ENCODE measurements at regions of chr1 and their contacts with region 1.

Region 1: GRCh38 chr1:147627435-147628110 is 42.8 kb downstream of the ACP6 start:
- DNase-seq: peak; percentile 35 to 75
- ATAC-seq: peak; percentile 76 to 87 (median 84)
- H3K4me3 ChIP-seq: no peak overlapping the region
- H3K4me3 Mint-ChIP-seq: no peak overlapping the region
- H3K27ac ChIP-seq: no peak overlapping the region
- H3K27ac Mint-ChIP-seq: no peak overlapping the region
- H3K4me1 ChIP-seq: peaks cover 12% of the 10 kb centered on the region
- H3K4me1 Mint-ChIP-seq: peaks cover 20 to 31% of the 10 kb centered on the region in 2 donors
- H3K27me3 ChIP-seq: no peaks in the 10 kb centered on the region
- H3K27me3 Mint-ChIP-seq: no peaks in the 10 kb centered on the region
- CTCF ChIP-seq: peak; percentile 96

Region 2: GRCh38 chr1:147273409-147274336 is 353.9 kb before region 1 on chr1:
- intact Hi-C with region 1: loop called (anchors 5 kb)
- DNase-seq: peak in 1 of 2 donors; percentile 73
- ATAC-seq: peak in 2 of 3 donors; percentile 61 to 64
- H3K4me3 ChIP-seq: no peak overlapping the region
- H3K4me3 Mint-ChIP-seq: no peak overlapping the region
- H3K27ac ChIP-seq: no peak overlapping the region
- H3K27ac Mint-ChIP-seq: no peak overlapping the region
- H3K4me1 ChIP-seq: no peaks in the 10 kb centered on the region
- H3K4me1 Mint-ChIP-seq: peaks cover 4 to 5% of the 10 kb centered on the region in 2 donors
- H3K27me3 ChIP-seq: no peaks in the 10 kb centered on the region
- H3K27me3 Mint-ChIP-seq: no peaks in the 10 kb centered on the region
- CTCF ChIP-seq: peak; percentile 65

Region 3: DNA sequence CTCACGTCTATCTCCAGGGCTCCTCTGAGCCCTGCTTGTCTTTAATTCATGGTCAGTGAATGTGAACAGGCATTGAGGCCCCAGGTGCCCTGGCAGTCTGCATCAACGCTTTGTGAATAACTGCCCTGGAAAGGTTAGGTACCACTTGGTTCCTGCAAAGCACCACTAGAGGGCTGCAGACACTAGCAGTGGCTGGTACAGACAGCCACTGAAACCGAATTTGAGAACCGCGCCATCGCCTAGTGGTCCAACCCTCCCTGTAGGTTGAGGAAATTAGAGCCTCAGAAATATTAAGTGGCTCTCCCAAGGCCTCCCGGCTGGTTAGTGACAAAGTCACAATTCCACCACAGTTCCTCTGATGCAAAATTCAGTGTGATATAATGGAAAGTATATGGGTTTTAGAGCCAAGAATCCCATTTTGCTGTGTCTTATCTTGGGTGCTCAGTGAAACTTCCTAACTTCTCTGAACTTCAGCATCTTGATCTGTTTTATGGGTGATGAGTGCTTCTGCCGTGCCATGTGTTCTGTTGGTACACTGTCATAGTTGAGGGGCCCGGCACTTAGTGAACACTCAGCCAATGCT is 132.5 kb before region 1 on chr1:
- intact Hi-C with region 1: loop called (anchors 1 kb)
- DNase-seq: peak; percentile 48 to 85
- ATAC-seq: peak; percentile 88 to 100 (median 99)
- H3K4me3 ChIP-seq: no peak overlapping the region
- H3K4me3 Mint-ChIP-seq: no peak overlapping the region
- H3K27ac ChIP-seq: no peak overlapping the region
- H3K27ac Mint-ChIP-seq: no peak overlapping the region
- H3K4me1 ChIP-seq: no peaks in the 10 kb centered on the region
- H3K4me1 Mint-ChIP-seq: no peaks in the 10 kb centered on the region
- H3K27me3 ChIP-seq: no peaks in the 10 kb centered on the region
- H3K27me3 Mint-ChIP-seq: peaks cover 11 to 13% of the 10 kb centered on the region in 2 donors
- CTCF ChIP-seq: peak; percentile 87

Region 4: DNA sequence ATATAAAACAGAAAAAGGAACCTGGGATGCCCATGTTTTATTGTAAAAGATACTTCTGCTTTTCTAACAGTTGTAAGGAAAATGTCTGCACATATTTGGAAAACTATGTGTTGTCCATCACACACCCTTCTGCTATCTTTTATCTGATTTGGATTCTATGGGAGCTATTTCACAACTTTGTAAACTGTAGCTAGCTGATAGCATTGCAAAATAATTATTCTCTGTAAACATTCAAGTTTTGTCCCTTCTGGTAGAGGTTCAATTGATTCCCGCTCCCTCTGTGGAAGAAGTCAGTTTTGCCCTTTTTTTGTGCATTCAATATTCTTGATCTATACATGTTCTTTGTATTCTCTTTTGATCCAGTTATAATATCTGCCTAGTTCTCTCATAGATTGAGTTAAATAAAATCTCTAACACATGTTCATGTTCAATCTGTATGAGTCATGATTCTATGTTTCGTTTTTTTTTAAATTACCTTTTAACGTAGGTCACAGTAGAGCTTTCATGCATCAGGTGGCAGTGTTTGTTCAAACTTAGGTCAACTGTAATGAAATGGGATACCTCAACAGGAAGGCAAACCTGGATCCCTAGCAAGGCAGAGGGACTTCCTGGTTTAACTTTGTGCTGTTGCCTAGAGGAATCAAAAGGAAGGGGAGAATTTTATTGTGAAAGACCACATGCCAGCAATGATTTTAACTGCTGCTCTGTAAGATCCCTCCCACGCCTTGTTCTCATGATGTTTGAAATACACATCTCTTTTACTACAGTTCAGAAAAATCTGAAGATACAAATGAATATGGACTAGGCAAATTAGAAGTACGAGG is 112.3 kb before region 1 on chr1:
- intact Hi-C with region 1: loop called (anchors 1 kb)
- DNase-seq: peak in 1 of 2 donors; percentile 58
- ATAC-seq: peak in 2 of 3 donors; percentile 39 to 44
- H3K4me3 ChIP-seq: no peak overlapping the region
- H3K4me3 Mint-ChIP-seq: no peak overlapping the region
- H3K27ac ChIP-seq: no peak overlapping the region
- H3K27ac Mint-ChIP-seq: no peak overlapping the region
- H3K4me1 ChIP-seq: no peaks in the 10 kb centered on the region
- H3K4me1 Mint-ChIP-seq: peaks cover 6% of the 10 kb centered on the region in 2 donors
- H3K27me3 ChIP-seq: peaks cover 3% of the 10 kb centered on the region
- H3K27me3 Mint-ChIP-seq: peaks cover 16 to 32% of the 10 kb centered on the region in 2 donors
- CTCF ChIP-seq: no peak

Region 5: DNA sequence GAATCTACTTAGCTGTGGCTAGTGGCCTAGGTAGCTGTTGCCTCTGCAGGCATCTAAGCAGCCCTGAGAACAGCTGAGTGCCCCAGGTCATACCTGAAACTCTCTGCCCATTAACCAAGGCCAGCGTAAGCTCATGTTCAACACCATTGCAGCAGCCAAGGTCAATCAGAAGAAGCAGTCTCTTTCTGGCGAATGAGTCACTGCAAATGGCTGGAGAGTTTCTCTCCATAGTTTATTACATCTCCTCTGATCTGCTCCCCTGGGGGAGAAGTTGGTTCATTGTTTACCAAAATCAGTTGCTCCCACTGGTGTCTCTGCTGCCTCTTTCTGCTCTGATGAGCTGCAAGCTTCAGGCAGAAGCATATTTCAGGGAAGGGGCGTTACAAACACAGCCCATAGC is 93.2 kb before region 1 on chr1:
- intact Hi-C with region 1: no loop called
- DNase-seq: no peak
- ATAC-seq: no peak
- H3K4me3 ChIP-seq: no peak overlapping the region
- H3K4me3 Mint-ChIP-seq: no peak overlapping the region
- H3K27ac ChIP-seq: no peak overlapping the region
- H3K27ac Mint-ChIP-seq: no peak overlapping the region
- H3K4me1 ChIP-seq: no peaks in the 10 kb centered on the region
- H3K4me1 Mint-ChIP-seq: no peaks in the 10 kb centered on the region
- H3K27me3 ChIP-seq: peaks cover 10% of the 10 kb centered on the region
- H3K27me3 Mint-ChIP-seq: peaks cover 19 to 32% of the 10 kb centered on the region in 2 donors
- CTCF ChIP-seq: no peak

Region 6: DNA sequence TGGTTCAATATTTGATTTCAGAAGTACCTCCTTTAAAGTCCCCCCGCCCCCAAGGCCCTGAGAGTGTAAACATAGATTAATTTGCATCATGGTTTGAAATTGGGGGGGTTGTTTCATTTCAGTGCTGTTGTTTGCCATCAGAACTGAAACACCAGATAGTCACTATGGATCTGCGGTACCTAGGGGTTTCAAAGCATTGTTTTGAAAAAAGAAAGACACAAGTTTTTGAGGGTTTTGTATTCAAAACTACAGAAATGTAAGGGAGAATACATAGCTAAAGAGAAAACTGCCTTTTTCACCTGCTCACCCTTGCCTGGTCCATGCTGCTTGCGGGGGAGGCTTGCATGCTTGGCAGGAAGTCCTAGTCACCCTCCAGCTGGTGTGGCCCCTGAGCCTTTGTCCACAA is 16.5 kb before region 1 on chr1:
- intact Hi-C with region 1: no loop called
- DNase-seq: no peak
- ATAC-seq: no peak
- H3K4me3 ChIP-seq: no peak overlapping the region
- H3K4me3 Mint-ChIP-seq: no peak overlapping the region
- H3K27ac ChIP-seq: no peak overlapping the region
- H3K27ac Mint-ChIP-seq: no peak overlapping the region
- H3K4me1 ChIP-seq: no peaks in the 10 kb centered on the region
- H3K4me1 Mint-ChIP-seq: no peaks in the 10 kb centered on the region
- H3K27me3 ChIP-seq: no peaks in the 10 kb centered on the region
- H3K27me3 Mint-ChIP-seq: no peaks in the 10 kb centered on the region
- CTCF ChIP-seq: no peak

Region 7: DNA sequence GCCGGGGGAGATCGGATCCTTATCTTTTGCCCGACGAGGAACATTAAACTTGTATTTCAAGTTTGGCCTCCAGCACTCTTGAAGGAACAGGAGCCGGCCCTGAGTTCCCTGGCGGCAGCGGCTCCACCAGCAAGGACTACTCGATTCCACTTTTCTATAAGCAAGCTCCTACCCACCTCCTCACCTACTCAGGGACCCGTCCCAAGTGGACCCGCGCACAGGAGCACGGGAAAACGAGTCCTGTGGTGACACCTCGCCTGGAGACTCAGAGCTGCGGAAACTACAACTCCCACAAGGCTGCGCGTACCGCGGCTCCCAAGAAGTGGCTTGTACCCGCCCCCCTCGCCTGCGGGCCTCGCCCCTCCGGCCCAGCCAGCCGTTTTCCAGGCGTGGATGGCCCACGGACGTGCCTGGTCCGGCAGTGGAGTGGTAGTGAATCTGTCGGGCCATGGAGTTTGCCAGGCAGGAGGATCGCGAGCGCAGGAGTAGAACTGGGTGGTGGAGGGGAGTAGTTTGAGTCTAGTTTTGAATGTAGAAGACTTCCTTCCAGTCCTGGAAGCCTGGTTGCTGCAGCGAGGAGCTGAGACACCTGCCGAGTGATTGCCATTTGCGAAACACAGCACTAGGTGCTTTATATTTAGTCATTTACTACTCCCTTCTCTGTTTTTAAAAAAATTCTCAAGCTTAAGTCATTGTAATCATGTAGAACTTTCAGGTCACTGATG is 42.9 kb after region 1 on chr1 and contains the start of gene ACP6:
- intact Hi-C with region 1: no loop called
- DNase-seq: peak; percentile 67 to 92
- ATAC-seq: peak; percentile 92 to 95 (median 94)
- H3K4me3 ChIP-seq: peak within 1 kb of the TSS; percentile 69
- H3K4me3 Mint-ChIP-seq: peak within 1 kb of the TSS; percentile 94
- H3K27ac ChIP-seq: no peak within 1 kb of the TSS
- H3K27ac Mint-ChIP-seq: peak within 1 kb of the TSS; percentile 48 to 78
- H3K4me1 ChIP-seq: peaks cover 14% of the 10 kb centered on the region
- H3K4me1 Mint-ChIP-seq: peaks cover 11 to 15% of the 10 kb centered on the region in 2 donors
- H3K27me3 ChIP-seq: no peaks in the 10 kb centered on the region
- H3K27me3 Mint-ChIP-seq: peaks cover 10 to 14% of the 10 kb centered on the region in 2 donors
- CTCF ChIP-seq: no peak
- total RNA-seq, gene ACP6: 7.7 to 9.4 (median 7.8) TPM

Measured in natural killer cell (primary cell).